Activated CD4-positive, alpha-beta memory T cell treated with anti-CD3 and anti-CD28 coated beads for 36 hours (primary cell): ENCODE measurements at regions of chr11 and their contacts with region 1.

Region 1: GRCh38 chr11:7278314-7278917 is 26.7 kb downstream of the SYT9 start:
- DNase-seq: no peak
- H3K4me3 Mint-ChIP-seq: no peak overlapping the region
- H3K27ac Mint-ChIP-seq: no peak overlapping the region
- H3K4me1 Mint-ChIP-seq: no peaks in the 10 kb centered on the region
- H3K27me3 Mint-ChIP-seq: peaks cover 8% of the 10 kb centered on the region

Region 2: DNA sequence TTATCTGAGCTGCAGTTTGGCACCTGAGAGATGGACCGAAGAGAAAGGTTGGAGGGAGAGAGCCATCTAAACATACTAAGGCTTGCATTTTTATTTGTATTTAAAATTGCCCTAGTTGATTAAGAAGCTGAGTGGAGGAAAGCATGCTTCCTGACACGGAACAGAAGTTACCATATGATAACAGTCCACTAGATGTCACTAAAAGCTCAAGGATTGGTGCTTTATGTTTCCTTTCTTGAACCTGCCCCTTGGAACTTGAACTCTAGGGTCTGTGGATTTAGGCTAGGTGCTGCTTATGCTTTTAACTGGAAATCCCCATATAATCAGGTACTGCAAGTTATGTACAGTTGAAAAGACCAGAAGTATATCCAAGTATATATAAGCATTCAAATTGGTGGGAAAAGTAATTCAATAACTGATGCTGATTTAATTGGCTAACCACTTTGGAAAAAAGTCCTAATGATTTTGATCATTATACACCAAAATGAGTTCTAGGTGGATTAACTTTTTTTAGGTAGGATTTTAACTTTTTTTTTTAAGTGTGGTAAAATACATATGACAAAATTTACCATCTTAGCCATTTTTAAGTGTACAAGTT is 180.1 kb before region 1 on chr11:
- CTCF ChIA-PET with region 1: interaction called, 3 read pairs
- POLR2A ChIA-PET with region 1: no interaction called
- intact Hi-C with region 1: loop called (anchors 1 kb)
- DNase-seq: no peak
- H3K4me3 Mint-ChIP-seq: no peak overlapping the region
- H3K27ac Mint-ChIP-seq: no peak overlapping the region
- H3K4me1 Mint-ChIP-seq: no peaks in the 10 kb centered on the region
- H3K27me3 Mint-ChIP-seq: peaks cover 3% of the 10 kb centered on the region

Region 3: GRCh38 chr11:7292922-7293321 is 14.5 kb after region 1 on chr11:
- CTCF ChIA-PET with region 1: no interaction called
- POLR2A ChIA-PET with region 1: no interaction called
- intact Hi-C with region 1: no loop called
- DNase-seq: no peak
- H3K4me3 Mint-ChIP-seq: no peak overlapping the region
- H3K27ac Mint-ChIP-seq: no peak overlapping the region
- H3K4me1 Mint-ChIP-seq: no peaks in the 10 kb centered on the region
- H3K27me3 Mint-ChIP-seq: peaks cover 10% of the 10 kb centered on the region

Region 4: GRCh38 chr11:7341551-7341950 is 63.1 kb after region 1 on chr11:
- CTCF ChIA-PET with region 1: no interaction called
- POLR2A ChIA-PET with region 1: no interaction called
- intact Hi-C with region 1: no loop called
- DNase-seq: no peak
- H3K4me3 Mint-ChIP-seq: no peak overlapping the region
- H3K27ac Mint-ChIP-seq: no peak overlapping the region
- H3K4me1 Mint-ChIP-seq: no peaks in the 10 kb centered on the region
- H3K27me3 Mint-ChIP-seq: peaks cover 18% of the 10 kb centered on the region